ENCODE measurements at regions of chr11 and their contacts with region 1.

Region 1: DNA sequence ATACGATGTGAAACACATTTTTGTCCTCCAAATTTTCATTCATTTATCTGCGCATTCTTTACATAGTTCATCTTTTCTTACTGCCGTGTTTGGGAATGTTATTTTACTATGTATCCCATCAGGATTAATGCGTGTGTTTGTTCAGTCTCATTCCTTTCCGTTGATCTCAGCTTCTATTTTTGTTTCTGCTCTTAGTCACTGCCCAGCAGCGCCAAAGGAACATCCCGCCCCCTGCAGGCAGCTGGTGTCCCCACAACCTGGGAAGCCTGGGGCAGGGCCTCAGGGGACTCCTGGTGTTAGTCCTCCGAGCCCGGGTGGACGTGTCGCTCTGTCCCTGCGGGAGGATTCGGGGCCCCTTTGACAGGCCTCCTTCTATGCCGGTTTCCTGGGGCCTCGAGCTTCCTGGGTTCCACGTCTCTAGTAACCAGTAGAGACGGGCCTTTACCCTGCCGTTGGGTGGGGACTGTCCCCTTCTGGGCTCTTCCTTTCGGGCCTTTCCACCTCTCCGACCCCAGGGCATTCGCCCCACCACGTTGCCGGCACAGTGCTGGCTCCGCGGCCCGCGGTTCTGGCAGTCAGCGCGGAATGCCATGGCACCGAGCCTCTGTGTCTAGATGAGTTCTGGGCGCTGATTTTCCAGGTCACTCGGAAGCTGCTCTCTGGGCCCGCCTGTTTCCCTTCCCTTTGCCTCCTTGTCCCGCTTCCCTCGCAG is 39.8 kb downstream of the WEE1 start:
- DNase-seq: peak; percentile 95
- ATAC-seq: peak; percentile 82
- H3K4me3 Mint-ChIP-seq: peak overlapping the region; percentile 79
- H3K27ac Mint-ChIP-seq: peak overlapping the region; percentile 95
- H3K4me1 Mint-ChIP-seq: peaks cover 32% of the 10 kb centered on the region
- H3K27me3 Mint-ChIP-seq: no peaks in the 10 kb centered on the region
- CTCF ChIP-seq: peak; percentile 82

Region 2: GRCh38 chr11:9573052-9573774 is 40.1 kb before region 1 on chr11 and contains the start of gene WEE1:
- CTCF ChIA-PET with region 1: interaction called, 10 read pairs
- POLR2A ChIA-PET with region 1: interaction called, 18 read pairs
- DNase-seq: peak; percentile 99
- ATAC-seq: peak; percentile 90
- H3K4me3 Mint-ChIP-seq: peak within 1 kb of the TSS; percentile 95
- H3K27ac Mint-ChIP-seq: peak within 1 kb of the TSS; percentile 95
- H3K4me1 Mint-ChIP-seq: peaks cover 64% of the 10 kb centered on the region
- H3K27me3 Mint-ChIP-seq: no peaks in the 10 kb centered on the region
- CTCF ChIP-seq: no peak
- total RNA-seq, gene WEE1: 85.5 to 109 TPM (median 91.3 TPM) in 3 replicates

Region 3: GRCh38 chr11:9601037-9601875 is 12.0 kb before region 1 on chr11:
- CTCF ChIA-PET with region 1: interaction called, 32 read pairs
- POLR2A ChIA-PET with region 1: no interaction called
- DNase-seq: peak; percentile 36
- ATAC-seq: peak; percentile 91
- H3K4me3 Mint-ChIP-seq: 0 out of 2 replicates have a peak overlapping the region, but pooled peaks have one; percentile 3
- H3K27ac Mint-ChIP-seq: peak overlapping the region; percentile 90
- H3K4me1 Mint-ChIP-seq: peaks cover 24% of the 10 kb centered on the region
- H3K27me3 Mint-ChIP-seq: no peaks in the 10 kb centered on the region
- CTCF ChIP-seq: no peak

Region 4: DNA sequence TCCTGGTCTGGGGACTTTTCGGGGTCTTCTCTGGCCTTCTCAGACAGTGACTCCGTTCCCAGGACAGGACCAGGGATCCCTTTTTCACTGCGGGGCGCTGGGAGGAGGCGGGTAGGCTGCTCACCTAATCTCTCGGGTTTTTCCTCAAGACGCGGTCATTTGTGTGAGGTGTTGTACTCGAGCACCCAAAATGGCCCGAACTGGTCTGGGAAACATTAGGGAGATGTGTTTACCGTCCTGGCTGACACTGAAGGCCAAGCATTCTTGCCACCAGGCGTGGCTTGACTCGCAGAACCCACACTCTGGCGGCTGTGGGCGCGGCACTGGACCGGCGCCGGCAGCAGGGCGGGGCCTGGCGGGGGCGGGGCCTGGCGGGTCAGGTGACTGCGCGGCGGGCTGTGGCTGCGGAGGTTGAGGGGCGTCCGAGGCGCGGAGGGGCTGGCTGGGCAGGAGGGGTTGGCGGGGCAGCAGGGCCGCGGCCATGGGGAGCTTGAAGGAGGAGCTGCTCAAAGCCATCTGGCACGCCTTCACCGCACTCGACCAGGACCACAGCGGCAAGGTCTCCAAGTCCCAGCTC is 50.5 kb after region 1 on chr11 and contains the start of gene SWAP70:
- CTCF ChIA-PET with region 1: interaction called, 12 read pairs
- POLR2A ChIA-PET with region 1: no interaction called
- DNase-seq: peak; percentile 95
- ATAC-seq: peak; percentile 93
- H3K4me3 Mint-ChIP-seq: peak within 1 kb of the TSS; percentile 89
- H3K27ac Mint-ChIP-seq: peak within 1 kb of the TSS; percentile 95
- H3K4me1 Mint-ChIP-seq: peaks cover 21% of the 10 kb centered on the region
- H3K27me3 Mint-ChIP-seq: peaks cover 4% of the 10 kb centered on the region; the same call in 1 of the 2 replicates
- CTCF ChIP-seq: no peak
- total RNA-seq, gene SWAP70: 24.1 to 27.8 TPM (median 27.6 TPM) in 3 replicates